GM12878 (cell line): ENCODE measurements at regions of chr18 and their contacts with region 1.

Region 1: DNA sequence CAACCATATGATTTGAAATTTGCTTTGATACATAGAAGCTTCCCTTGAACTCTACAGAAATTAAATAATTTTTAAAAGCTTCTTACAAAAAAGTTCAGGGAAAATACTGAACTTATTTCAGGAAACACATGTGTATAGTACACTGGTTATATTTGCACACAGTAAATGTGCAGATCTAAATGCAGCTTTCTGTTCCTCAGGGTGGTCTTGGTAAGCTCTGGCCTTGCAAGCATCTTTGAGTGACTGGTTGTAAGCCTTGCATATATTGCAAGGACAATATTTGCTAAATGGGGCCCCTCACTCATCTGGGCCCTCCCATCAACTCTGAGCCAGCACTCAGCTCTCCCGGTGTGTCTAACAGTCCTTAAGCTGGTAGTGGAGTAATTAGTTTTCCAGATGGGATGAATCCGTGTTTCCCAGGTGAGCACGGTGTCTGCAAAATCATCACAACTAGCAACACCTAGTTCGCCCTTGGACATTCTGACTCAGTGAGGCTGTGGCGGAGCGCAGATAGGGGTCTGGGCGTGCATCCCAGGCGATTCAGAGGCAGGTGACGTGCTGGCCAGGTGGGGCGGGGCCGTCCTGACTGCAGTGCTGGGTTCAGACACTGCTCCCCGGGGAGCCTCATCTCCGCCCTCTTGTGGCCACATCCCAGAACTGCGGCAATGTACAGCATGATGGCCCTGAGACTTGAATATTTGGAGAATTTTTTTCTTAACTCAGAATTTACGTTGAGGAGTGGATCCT is 149.6 kb downstream of the MBP start:
- DNase-seq: peak; percentile 48
- ATAC-seq: peak; percentile 83
- H3K4me3 ChIP-seq: no peak overlapping the region
- H3K27ac ChIP-seq: no peak overlapping the region
- H3K4me1 ChIP-seq: peaks cover 21% of the 10 kb centered on the region
- H3K27me3 ChIP-seq: no peaks in the 10 kb centered on the region
- CTCF ChIP-seq: peak; percentile 91 to 93 (median 92)
- EP300 ChIP-seq: no peak
- POLR2A ChIP-seq: no peak
- RAD21 ChIP-seq: peak; percentile 83

Region 2: GRCh38 chr18:76903386-76903785 is 79.6 kb before region 1 on chr18:
- CTCF ChIA-PET with region 1: interaction called, 12 read pairs
- POLR2A ChIA-PET with region 1: no interaction called
- RAD21 ChIA-PET with region 1: no interaction called
- SMC1A ChIA-PET with region 1: interaction called, 4 read pairs
- in situ Hi-C with region 1: no loop called
- intact Hi-C with region 1: no loop called
- DNase-seq: no peak
- ATAC-seq: no peak
- H3K4me3 ChIP-seq: no peak overlapping the region
- H3K27ac ChIP-seq: no peak overlapping the region
- H3K4me1 ChIP-seq: no peaks in the 10 kb centered on the region
- H3K27me3 ChIP-seq: no peaks in the 10 kb centered on the region
- CTCF ChIP-seq: no peak
- EP300 ChIP-seq: no peak
- POLR2A ChIP-seq: no peak
- RAD21 ChIP-seq: no peak

Region 3: GRCh38 chr18:76943542-76944339 is 39.3 kb before region 1 on chr18:
- CTCF ChIA-PET with region 1: interaction called, 62 read pairs
- POLR2A ChIA-PET with region 1: no interaction called
- RAD21 ChIA-PET with region 1: interaction called, 4 read pairs
- SMC1A ChIA-PET with region 1: interaction called, 13 read pairs
- in situ Hi-C with region 1: no loop called
- intact Hi-C with region 1: no loop called
- DNase-seq: no peak
- ATAC-seq: no peak
- H3K4me3 ChIP-seq: no peak overlapping the region
- H3K27ac ChIP-seq: no peak overlapping the region
- H3K4me1 ChIP-seq: no peaks in the 10 kb centered on the region
- H3K27me3 ChIP-seq: no peaks in the 10 kb centered on the region
- CTCF ChIP-seq: no peak
- EP300 ChIP-seq: no peak
- POLR2A ChIP-seq: no peak
- RAD21 ChIP-seq: no peak

Region 4: GRCh38 chr18:76963936-76964335 is 19.1 kb before region 1 on chr18:
- CTCF ChIA-PET with region 1: interaction called, 208 read pairs
- POLR2A ChIA-PET with region 1: interaction called, 5 read pairs
- RAD21 ChIA-PET with region 1: interaction called, 70 read pairs
- SMC1A ChIA-PET with region 1: interaction called, 140 read pairs
- in situ Hi-C with region 1: no loop called
- intact Hi-C with region 1: loop called (anchors 2 kb)
- DNase-seq: no peak
- ATAC-seq: peak; percentile 63
- H3K4me3 ChIP-seq: 0 out of 2 replicates have a peak overlapping the region, but pooled peaks have one; percentile 17
- H3K27ac ChIP-seq: peak overlapping the region; percentile 46
- H3K4me1 ChIP-seq: peaks cover 21% of the 10 kb centered on the region
- H3K27me3 ChIP-seq: no peaks in the 10 kb centered on the region
- CTCF ChIP-seq: no peak
- EP300 ChIP-seq: no peak
- POLR2A ChIP-seq: no peak
- RAD21 ChIP-seq: no peak

Region 5: GRCh38 chr18:77054606-77055428 is 71.8 kb after region 1 on chr18:
- CTCF ChIA-PET with region 1: interaction called, 14 read pairs
- POLR2A ChIA-PET with region 1: no interaction called
- RAD21 ChIA-PET with region 1: interaction called, 5 read pairs
- SMC1A ChIA-PET with region 1: no interaction called
- in situ Hi-C with region 1: no loop called
- intact Hi-C with region 1: no loop called
- DNase-seq: peak; percentile 80
- ATAC-seq: peak; percentile 93
- H3K4me3 ChIP-seq: peak overlapping the region; percentile 53
- H3K27ac ChIP-seq: peak overlapping the region; percentile 88
- H3K4me1 ChIP-seq: peaks cover 46% of the 10 kb centered on the region
- H3K27me3 ChIP-seq: no peaks in the 10 kb centered on the region
- CTCF ChIP-seq: peak; percentile 73 to 78 (median 75)
- EP300 ChIP-seq: peak; percentile 70 to 74
- POLR2A ChIP-seq: no peak; the same call in 1 of the 2 replicates
- RAD21 ChIP-seq: peak; percentile 58

Region 6: DNA sequence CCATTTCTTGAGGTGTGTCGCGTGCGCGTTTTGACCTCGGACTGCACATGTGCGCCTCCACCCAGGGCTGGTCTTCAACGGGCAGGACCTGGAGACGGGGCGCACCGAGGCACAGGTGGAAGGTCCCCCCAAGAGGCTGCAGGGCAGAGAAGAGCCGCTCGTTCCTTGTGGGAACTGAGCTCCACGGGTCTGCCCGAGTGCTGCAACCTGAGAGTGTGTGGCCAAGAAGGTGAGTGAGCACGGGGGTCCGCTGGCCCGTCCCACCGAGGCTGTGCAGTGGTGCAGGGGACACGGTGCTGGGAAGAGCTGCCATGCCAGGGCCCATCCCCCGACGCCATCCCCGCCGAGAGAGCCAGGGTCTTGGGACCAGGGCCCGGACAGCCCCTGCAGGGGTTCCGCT is 534.9 kb after region 1 on chr18:
- CTCF ChIA-PET with region 1: no interaction called
- POLR2A ChIA-PET with region 1: no interaction called
- RAD21 ChIA-PET with region 1: no interaction called
- SMC1A ChIA-PET with region 1: no interaction called
- in situ Hi-C with region 1: no loop called
- intact Hi-C with region 1: no loop called
- DNase-seq: no peak
- ATAC-seq: no peak
- H3K4me3 ChIP-seq: no peak overlapping the region
- H3K27ac ChIP-seq: no peak overlapping the region
- H3K4me1 ChIP-seq: no peaks in the 10 kb centered on the region
- H3K27me3 ChIP-seq: no peaks in the 10 kb centered on the region
- CTCF ChIP-seq: no peak
- EP300 ChIP-seq: no peak
- POLR2A ChIP-seq: no peak
- RAD21 ChIP-seq: no peak